Heart right ventricle (tissue), 16 donors: ENCODE measurements at regions of chr6 and their contacts with region 1.

Region 1: DNA sequence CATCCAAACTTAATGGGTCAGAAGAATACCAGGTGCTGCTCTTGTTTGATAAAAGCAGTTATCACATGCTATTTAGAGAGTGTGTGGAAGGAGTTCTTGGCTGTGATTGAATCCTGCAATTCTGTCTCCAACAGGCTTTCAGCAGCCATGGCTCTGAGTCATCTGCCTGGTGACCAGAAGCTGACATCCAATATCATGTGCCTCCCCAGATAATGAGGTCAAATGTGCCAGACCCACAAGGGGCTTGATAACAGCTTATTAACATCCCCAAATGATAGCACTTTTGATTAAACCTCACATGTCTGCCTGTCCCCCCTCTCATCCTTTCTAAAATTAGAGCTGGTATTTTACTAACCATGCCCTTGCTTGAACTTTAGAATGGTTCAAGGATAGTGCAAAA is 175.7 kb upstream of the PLN start:
- DNase-seq: peak; percentile 21 to 77
- ATAC-seq: peak; percentile 84 to 95 (median 90)
- H3K4me3 ChIP-seq: no peak overlapping the region
- H3K27ac ChIP-seq: peak overlapping the region; percentile 4 to 87 (median 80)
- H3K4me1 ChIP-seq: peaks cover 0 to 25% (median 6%) of the 10 kb centered on the region in 9 donors
- H3K27me3 ChIP-seq: no peaks in the 10 kb centered on the region
- CTCF ChIP-seq: no peak

Region 2: GRCh38 chr6:118277631-118278030 is 94.8 kb before region 1 on chr6:
- intact Hi-C with region 1: no loop called
- DNase-seq: no peak
- ATAC-seq: no peak
- H3K4me3 ChIP-seq: no peak overlapping the region
- H3K27ac ChIP-seq: no peak overlapping the region
- H3K4me1 ChIP-seq: peaks cover 0 to 6% (median 0%) of the 10 kb centered on the region in 9 donors
- H3K27me3 ChIP-seq: no peaks in the 10 kb centered on the region
- CTCF ChIP-seq: no peak

Region 3: GRCh38 chr6:118292558-118292957 is 79.9 kb before region 1 on chr6:
- intact Hi-C with region 1: loop called in 7 of 10 experiments (anchors 2 to 10 kb)
- DNase-seq: no peak
- ATAC-seq: no peak
- H3K4me3 ChIP-seq: no peak overlapping the region
- H3K27ac ChIP-seq: peak overlapping the region in 8 of 10 donors; percentile 57 to 91 (median 84)
- H3K4me1 ChIP-seq: peaks cover 0 to 54% (median 17%) of the 10 kb centered on the region in 9 donors
- H3K27me3 ChIP-seq: no peaks in the 10 kb centered on the region
- CTCF ChIP-seq: no peak

Region 4: GRCh38 chr6:118307581-118307980 is 64.8 kb before region 1 on chr6:
- intact Hi-C with region 1: loop called in 1 of 10 experiments (anchors 5 kb)
- DNase-seq: peak; percentile 33 to 60
- ATAC-seq: peak; percentile 24 to 90 (median 67)
- H3K4me3 ChIP-seq: no peak overlapping the region
- H3K27ac ChIP-seq: peak overlapping the region; percentile 34 to 83 (median 74)
- H3K4me1 ChIP-seq: peaks cover 0 to 54% (median 28%) of the 10 kb centered on the region in 9 donors
- H3K27me3 ChIP-seq: no peaks in the 10 kb centered on the region
- CTCF ChIP-seq: no peak

Region 5: GRCh38 chr6:118468682-118469465 is 96.5 kb after region 1 on chr6:
- intact Hi-C with region 1: loop called in 1 of 10 experiments (anchors 2 kb)
- DNase-seq: no peak
- ATAC-seq: no peak
- H3K4me3 ChIP-seq: no peak overlapping the region
- H3K27ac ChIP-seq: no peak overlapping the region
- H3K4me1 ChIP-seq: peaks cover 0 to 11% (median 0%) of the 10 kb centered on the region in 9 donors
- H3K27me3 ChIP-seq: no peaks in the 10 kb centered on the region
- CTCF ChIP-seq: no peak

Region 6: DNA sequence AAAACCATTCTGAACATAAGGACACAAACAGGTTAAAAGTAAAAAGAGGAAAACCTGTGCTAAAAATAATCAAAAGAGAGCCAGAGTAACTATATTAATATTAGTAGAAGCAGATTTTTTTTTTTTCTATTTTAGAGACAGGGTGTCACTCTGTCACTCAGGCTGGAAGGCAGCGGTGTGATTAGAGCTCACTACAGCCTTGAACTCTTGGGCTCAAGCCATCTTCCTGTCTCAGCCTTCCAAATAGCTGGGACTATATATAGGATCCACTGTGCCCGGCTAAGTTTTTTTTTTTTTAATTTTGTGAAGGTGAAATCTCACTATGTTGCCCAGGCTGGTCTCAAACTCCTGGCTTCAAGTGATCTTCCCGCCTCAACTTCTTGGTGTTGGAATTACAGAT is 142.3 kb after region 1 on chr6:
- intact Hi-C with region 1: loop called in 5 of 10 experiments (anchors 2 to 10 kb)
- DNase-seq: peak in 1 of 2 donors; percentile 75
- ATAC-seq: peak; percentile 93 to 99 (median 98)
- H3K4me3 ChIP-seq: no peak overlapping the region
- H3K27ac ChIP-seq: peak overlapping the region in 9 of 10 donors; percentile 44 to 83 (median 79)
- H3K4me1 ChIP-seq: peaks cover 0 to 42% (median 3%) of the 10 kb centered on the region in 9 donors
- H3K27me3 ChIP-seq: no peaks in the 10 kb centered on the region
- CTCF ChIP-seq: no peak